ENCODE measurements at regions of chr12 and their contacts with region 1.

Region 1: GRCh38 chr12:3574986-3575385 is 84.0 kb downstream of the PRMT8 start:
- DNase-seq: no peak
- ATAC-seq: no peak
- H3K4me3 ChIP-seq: no peak overlapping the region
- H3K27ac ChIP-seq: no peak overlapping the region
- H3K4me1 ChIP-seq: no peaks in the 10 kb centered on the region
- H3K27me3 ChIP-seq: peaks cover 42% of the 10 kb centered on the region
- CTCF ChIP-seq: no peak
- POLR2A ChIP-seq: no peak
- RAD21 ChIP-seq: no peak

Region 2: GRCh38 chr12:3554371-3555115 is 20.4 kb before region 1 on chr12:
- CTCF ChIA-PET with region 1: no interaction called
- POLR2A ChIA-PET with region 1: no interaction called
- RAD21 ChIA-PET with region 1: no interaction called
- intact Hi-C with region 1: no loop called
- DNase-seq: no peak
- ATAC-seq: peak; percentile 54; the same call in 1 of the 2 replicates
- H3K4me3 ChIP-seq: no peak overlapping the region
- H3K27ac ChIP-seq: no peak overlapping the region
- H3K4me1 ChIP-seq: no peaks in the 10 kb centered on the region
- H3K27me3 ChIP-seq: peaks cover 62% of the 10 kb centered on the region
- CTCF ChIP-seq: no peak
- POLR2A ChIP-seq: no peak
- RAD21 ChIP-seq: no peak

Region 3: DNA sequence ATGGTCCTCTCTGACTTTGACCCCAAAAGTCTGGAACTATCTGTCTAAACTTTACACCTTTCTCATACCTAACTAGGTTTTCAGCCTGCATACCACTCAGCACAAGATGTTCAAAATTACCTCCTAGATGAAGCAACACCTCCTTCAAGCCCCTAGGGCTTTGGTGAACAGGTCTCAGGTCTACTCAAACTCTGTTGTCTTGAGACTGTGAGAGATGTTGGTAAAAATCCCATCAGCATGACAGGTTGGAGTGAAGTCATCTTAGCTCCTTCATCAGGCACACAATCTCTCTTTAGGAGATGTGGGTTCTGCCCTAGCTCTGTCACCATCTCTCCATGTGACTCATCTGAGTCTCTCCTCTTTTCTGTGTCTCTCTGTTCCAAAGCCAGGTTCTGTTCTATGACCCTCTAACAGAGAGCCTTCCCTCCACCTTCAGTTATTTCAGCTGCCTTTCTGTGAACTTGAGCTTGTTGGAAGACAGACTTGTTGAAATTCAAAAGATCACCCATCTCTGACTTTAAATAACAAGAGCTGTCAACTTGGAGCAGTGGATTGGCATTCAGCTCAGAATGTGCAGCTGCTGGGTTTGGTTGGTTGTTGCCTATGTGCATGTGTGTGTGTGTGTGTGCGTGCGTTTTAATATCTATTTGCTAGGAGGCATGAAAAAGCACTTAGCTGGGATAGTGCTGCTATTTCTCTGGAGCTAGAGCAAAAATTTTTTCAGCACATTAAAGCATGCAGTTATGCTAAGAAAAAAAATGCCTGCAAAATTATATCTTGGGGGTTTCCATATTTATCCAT is 47.2 kb after region 1 on chr12:
- CTCF ChIA-PET with region 1: no interaction called
- POLR2A ChIA-PET with region 1: no interaction called
- RAD21 ChIA-PET with region 1: no interaction called
- intact Hi-C with region 1: loop called (anchors 1 kb)
- DNase-seq: no peak
- ATAC-seq: no peak
- H3K4me3 ChIP-seq: no peak overlapping the region
- H3K27ac ChIP-seq: no peak overlapping the region
- H3K4me1 ChIP-seq: no peaks in the 10 kb centered on the region
- H3K27me3 ChIP-seq: no peaks in the 10 kb centered on the region
- CTCF ChIP-seq: no peak
- POLR2A ChIP-seq: no peak
- RAD21 ChIP-seq: no peak

Region 4: GRCh38 chr12:4089121-4089606 is 514.2 kb after region 1 on chr12:
- CTCF ChIA-PET with region 1: no interaction called
- POLR2A ChIA-PET with region 1: no interaction called
- RAD21 ChIA-PET with region 1: no interaction called
- intact Hi-C with region 1: no loop called
- DNase-seq: no peak
- ATAC-seq: no peak
- H3K4me3 ChIP-seq: no peak overlapping the region
- H3K27ac ChIP-seq: no peak overlapping the region
- H3K4me1 ChIP-seq: no peaks in the 10 kb centered on the region
- H3K27me3 ChIP-seq: peaks cover 49% of the 10 kb centered on the region
- CTCF ChIP-seq: no peak
- POLR2A ChIP-seq: no peak
- RAD21 ChIP-seq: no peak

Region 5: GRCh38 chr12:4164559-4165558 is 589.9 kb after region 1 on chr12:
- CTCF ChIA-PET with region 1: no interaction called
- POLR2A ChIA-PET with region 1: no interaction called
- RAD21 ChIA-PET with region 1: no interaction called
- intact Hi-C with region 1: no loop called
- DNase-seq: no peak
- ATAC-seq: no peak
- H3K4me3 ChIP-seq: no peak overlapping the region
- H3K27ac ChIP-seq: no peak overlapping the region
- H3K4me1 ChIP-seq: no peaks in the 10 kb centered on the region
- H3K27me3 ChIP-seq: peaks cover 17% of the 10 kb centered on the region
- CTCF ChIP-seq: no peak
- POLR2A ChIP-seq: no peak
- RAD21 ChIP-seq: no peak

Measured in HCT116 (cell line).